ENCODE measurements at regions of chr6 and their contacts with region 1.

Region 1: GRCh38 chr6:104771258-104771832 is 88.4 kb downstream of the HACE1 start:
- DNase-seq: peak; percentile 44
- ATAC-seq: peak; percentile 95
- H3K4me3 ChIP-seq: no peak overlapping the region
- H3K27ac ChIP-seq: no peak overlapping the region
- H3K4me1 ChIP-seq: no peaks in the 10 kb centered on the region
- H3K27me3 ChIP-seq: no peaks in the 10 kb centered on the region
- CTCF ChIP-seq: peak; percentile 70
- POLR2A ChIP-seq: no peak
- RAD21 ChIP-seq: peak; percentile 65

Region 2: DNA sequence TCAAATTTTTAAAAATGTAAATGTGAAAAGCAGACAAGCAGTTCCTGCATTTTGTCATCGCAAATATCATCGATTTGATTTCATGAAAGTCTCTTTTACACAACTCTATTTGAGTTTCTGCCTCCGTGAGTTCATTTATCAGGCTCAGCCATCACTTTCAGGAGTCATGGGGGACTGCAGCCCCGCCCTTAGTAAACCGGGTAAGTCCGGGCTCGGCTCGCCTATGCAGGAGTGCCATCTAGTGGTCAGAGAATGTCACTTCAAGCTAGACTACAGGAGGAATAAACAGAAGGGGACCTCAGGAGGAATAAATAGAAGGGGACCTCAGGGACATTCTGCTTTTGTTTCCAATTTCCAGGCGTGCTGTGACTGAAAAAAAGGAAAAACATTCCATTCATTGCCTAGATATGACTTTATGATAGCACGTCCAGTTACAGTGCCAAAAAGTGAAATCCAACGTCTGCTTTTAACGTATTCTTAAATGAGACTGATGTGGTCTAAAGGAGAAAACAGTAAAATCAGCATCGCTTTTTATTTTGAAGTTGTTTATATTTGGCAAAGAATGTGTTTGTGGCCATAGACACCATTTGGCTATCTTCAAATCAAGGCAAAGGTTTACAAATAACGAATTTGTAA is 245.6 kb before region 1 on chr6:
- CTCF ChIA-PET with region 1: interaction called, 4 read pairs
- POLR2A ChIA-PET with region 1: no interaction called
- dilution Hi-C with region 1: no loop called
- in situ Hi-C with region 1: no loop called
- intact Hi-C with region 1: loop called (anchors 5 kb)
- DNase-seq: peak; percentile 64
- ATAC-seq: peak; percentile 100
- H3K4me3 ChIP-seq: peak overlapping the region; percentile 10; the same call in 1 of the 2 replicates
- H3K27ac ChIP-seq: no peak overlapping the region
- H3K4me1 ChIP-seq: no peaks in the 10 kb centered on the region
- H3K27me3 ChIP-seq: peaks cover 8% of the 10 kb centered on the region; the same call in 1 of the 2 replicates
- CTCF ChIP-seq: peak; percentile 85
- POLR2A ChIP-seq: no peak
- RAD21 ChIP-seq: peak; percentile 88

Region 3: DNA sequence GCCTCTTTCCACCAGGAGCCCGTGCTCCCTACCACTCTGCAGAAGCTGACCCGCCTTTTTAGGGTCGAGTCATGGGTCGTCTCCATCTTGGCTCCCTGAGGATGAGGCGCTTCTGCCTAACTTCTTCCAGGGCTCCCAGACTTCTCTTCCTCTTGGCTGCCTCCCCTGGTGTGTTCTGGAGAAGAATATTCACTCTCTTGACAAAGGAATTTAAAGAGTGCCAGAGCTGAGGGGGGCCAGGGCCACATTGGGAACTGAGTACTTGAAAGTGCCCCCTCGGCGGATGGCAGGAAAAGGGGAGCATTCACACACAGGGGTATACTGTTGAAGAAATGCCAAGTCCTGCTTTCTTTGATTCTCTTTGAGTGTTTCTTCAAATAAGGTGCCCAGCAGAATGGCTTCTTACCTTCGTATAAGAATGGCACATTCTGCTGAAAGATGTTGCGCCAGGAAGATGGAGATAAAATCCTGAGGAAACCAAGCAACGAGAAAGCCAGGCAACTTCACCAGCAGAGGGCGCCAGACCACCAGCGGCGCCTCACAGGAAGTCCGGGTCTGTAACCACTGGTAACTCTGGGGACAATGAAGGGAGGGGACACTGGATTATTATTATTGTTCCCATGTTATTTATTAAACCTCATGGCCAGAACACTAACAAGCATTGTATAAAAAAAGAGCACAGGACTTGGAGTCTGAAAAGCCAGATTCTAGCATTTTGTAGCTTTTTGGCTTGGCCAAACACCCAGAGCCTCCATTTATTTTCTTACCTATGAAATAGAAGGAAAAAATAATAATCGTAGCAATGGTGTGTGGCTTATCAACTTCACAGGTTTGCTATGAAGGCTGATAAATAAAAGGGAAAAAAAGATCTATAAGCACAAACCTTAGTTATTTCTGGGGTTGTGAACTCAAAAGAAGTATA is 88.4 kb before region 1 on chr6:
- CTCF ChIA-PET with region 1: interaction called, 3 read pairs
- POLR2A ChIA-PET with region 1: interaction called, 7 read pairs
- dilution Hi-C with region 1: no loop called
- in situ Hi-C with region 1: no loop called
- intact Hi-C with region 1: loop called (anchors 1 kb)
- DNase-seq: peak; percentile 59
- ATAC-seq: peak; percentile 72
- H3K4me3 ChIP-seq: no peak overlapping the region
- H3K27ac ChIP-seq: no peak overlapping the region
- H3K4me1 ChIP-seq: peaks cover under 1% of the 10 kb centered on the region; the same call in 1 of the 2 replicates
- H3K27me3 ChIP-seq: no peaks in the 10 kb centered on the region
- CTCF ChIP-seq: peak; percentile 88
- POLR2A ChIP-seq: no peak
- RAD21 ChIP-seq: peak; percentile 81

Region 4: GRCh38 chr6:104689551-104690205 is 81.7 kb before region 1 on chr6:
- CTCF ChIA-PET with region 1: no interaction called
- POLR2A ChIA-PET with region 1: no interaction called
- dilution Hi-C with region 1: no loop called
- in situ Hi-C with region 1: loop called (anchors 5 kb)
- intact Hi-C with region 1: no loop called
- DNase-seq: peak; percentile 28
- ATAC-seq: no peak; the same call in 1 of the 2 replicates
- H3K4me3 ChIP-seq: no peak overlapping the region
- H3K27ac ChIP-seq: no peak overlapping the region
- H3K4me1 ChIP-seq: peaks cover 1% of the 10 kb centered on the region; the same call in 1 of the 2 replicates
- H3K27me3 ChIP-seq: no peaks in the 10 kb centered on the region
- CTCF ChIP-seq: no peak
- POLR2A ChIP-seq: no peak
- RAD21 ChIP-seq: no peak

Measured in IMR-90 (cell line).